ENCODE measurements at regions of chr15 and their contacts with region 1.

Region 1: GRCh38 chr15:58340176-58340575 is 91.6 kb upstream of the LIPC start:
- DNase-seq: peak; percentile 69
- ATAC-seq: peak; percentile 78
- H3K4me3 ChIP-seq: no peak overlapping the region
- H3K27ac ChIP-seq: 0 out of 2 replicates have a peak overlapping the region, but pooled peaks have one; percentile 12
- H3K4me1 ChIP-seq: peaks cover 20% of the 10 kb centered on the region
- H3K27me3 ChIP-seq: no peaks in the 10 kb centered on the region
- CTCF ChIP-seq: no peak

Region 2: DNA sequence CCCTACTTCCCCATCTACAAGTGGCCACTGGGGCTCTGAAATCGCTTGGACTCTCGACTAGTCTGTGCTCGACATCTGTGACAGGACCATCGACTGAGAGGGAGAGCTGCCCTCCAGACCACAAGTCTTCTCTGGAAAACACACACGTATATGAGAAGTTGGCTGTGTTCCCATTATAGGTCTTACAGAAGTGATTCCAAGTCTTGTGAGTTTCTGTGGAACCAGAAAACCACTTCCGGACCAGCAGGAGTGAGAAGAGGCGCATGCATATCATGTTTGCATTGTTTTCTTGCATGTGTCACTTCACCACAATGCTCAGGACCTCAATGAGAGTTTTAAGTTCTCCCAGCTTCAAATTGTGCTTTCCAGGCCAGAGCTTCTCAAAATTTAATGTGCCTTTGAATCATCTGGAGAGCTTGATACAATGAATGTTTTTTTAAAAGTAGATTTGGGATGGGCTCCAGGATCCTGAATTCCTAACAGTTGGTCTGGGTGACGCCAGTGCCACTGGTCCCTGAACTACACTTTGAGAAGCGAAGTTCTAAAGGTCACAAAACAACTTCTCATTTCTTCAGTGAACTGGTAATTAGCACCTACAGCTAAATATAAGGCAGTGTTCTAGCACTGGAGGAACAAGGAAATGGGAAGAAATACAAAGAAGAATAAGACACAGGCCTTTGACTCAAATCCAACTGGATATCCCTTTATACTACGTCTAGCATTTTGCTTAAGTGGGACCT is 107.3 kb after region 1 on chr15:
- CTCF ChIA-PET with region 1: no interaction called
- POLR2A ChIA-PET with region 1: no interaction called
- intact Hi-C with region 1: no loop called
- DNase-seq: peak; percentile 21
- ATAC-seq: no peak
- H3K4me3 ChIP-seq: no peak overlapping the region
- H3K27ac ChIP-seq: no peak overlapping the region
- H3K4me1 ChIP-seq: peaks cover 9% of the 10 kb centered on the region
- H3K27me3 ChIP-seq: no peaks in the 10 kb centered on the region
- CTCF ChIP-seq: no peak

Region 3: DNA sequence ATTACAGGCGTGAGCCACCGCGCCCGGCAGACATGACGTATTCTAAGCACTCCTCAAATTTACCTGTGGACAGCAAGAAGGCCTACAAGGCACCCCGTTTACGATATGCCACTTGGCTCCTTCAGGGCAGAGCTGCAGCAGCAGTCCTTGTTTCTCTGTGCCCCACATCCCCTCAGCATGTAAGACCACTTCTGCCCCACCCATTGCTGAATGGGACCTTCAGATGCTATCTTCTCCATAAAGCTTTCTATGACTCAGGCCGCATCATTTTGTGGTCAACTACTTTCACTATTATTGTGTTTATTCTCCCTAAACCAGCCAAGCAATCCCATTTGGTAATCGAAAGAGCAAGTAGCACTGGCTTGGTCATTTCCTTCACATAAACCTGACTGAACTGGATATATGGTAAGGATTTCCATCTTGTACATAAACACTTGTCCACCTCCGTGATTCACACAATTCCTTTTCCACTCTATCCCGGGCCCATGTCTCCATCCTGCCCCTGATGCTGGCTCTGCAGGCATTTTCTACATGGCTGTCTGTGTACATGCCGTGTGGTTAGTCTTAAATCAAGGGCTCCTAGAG is 117.3 kb after region 1 on chr15:
- CTCF ChIA-PET with region 1: no interaction called
- POLR2A ChIA-PET with region 1: no interaction called
- intact Hi-C with region 1: loop called (anchors 5 kb)
- DNase-seq: peak; percentile 91
- ATAC-seq: peak; percentile 89
- H3K4me3 ChIP-seq: peak overlapping the region; percentile 20; the same call in 1 of the 2 replicates
- H3K27ac ChIP-seq: peak overlapping the region; percentile 96
- H3K4me1 ChIP-seq: peaks cover 52% of the 10 kb centered on the region
- H3K27me3 ChIP-seq: no peaks in the 10 kb centered on the region
- CTCF ChIP-seq: no peak

Region 4: GRCh38 chr15:58528188-58528870 is 188.2 kb after region 1 on chr15:
- CTCF ChIA-PET with region 1: no interaction called
- POLR2A ChIA-PET with region 1: no interaction called
- intact Hi-C with region 1: no loop called
- DNase-seq: peak; percentile 26
- ATAC-seq: no peak
- H3K4me3 ChIP-seq: no peak overlapping the region
- H3K27ac ChIP-seq: no peak overlapping the region
- H3K4me1 ChIP-seq: no peaks in the 10 kb centered on the region
- H3K27me3 ChIP-seq: no peaks in the 10 kb centered on the region
- CTCF ChIP-seq: no peak